ENCODE measurements at regions of chr12 and their contacts with region 1.

Region 1: DNA sequence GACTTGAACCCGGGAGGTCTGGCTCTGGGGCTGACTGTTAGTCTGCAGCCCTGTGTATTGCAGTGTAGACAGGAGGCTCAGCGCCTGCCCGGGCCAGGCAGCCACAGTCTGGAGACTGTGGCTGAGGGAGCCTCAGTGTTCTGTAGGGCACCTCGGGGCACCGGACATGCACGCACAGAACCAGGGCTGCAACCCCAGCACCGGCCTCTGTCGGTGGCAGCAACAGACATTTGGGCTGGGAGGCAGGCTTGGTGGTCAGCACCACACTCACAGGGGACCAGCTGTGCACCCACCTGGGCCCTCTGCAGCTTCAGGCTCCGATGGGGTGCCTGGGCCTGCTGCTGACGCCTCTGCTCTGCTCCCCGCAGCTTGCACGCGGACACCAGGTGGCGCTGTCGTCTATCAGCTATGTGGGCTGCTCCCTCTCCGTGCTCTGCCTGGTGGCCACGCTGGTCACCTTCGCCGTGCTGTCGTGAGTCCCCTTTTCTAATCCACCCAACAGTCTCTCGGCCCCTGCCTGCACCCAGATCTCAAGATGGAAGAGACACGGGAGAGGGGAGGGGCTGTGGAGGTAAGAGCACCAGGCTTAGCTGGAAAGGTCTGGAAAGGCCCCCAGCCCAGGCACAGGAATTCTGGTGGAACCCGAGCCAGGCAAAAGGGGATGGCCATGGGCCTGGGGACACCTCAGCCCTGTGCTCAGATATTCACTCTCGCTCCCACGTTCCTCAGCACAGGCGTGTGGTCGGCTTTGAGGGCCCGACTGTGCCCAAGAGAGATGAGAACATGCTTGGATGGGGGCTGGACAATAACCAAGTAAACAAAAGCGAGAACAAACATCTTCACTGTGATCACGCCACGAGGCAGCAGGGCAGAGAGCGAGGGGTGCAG is 151.0 kb downstream of the ADGRD1 start:
- DNase-seq: peak; percentile 75

Region 2: GRCh38 chr12:130916251-130916911 is 188.3 kb before region 1 on chr12:
- in situ Hi-C with region 1: loop called (anchors 25 kb)
- DNase-seq: peak; percentile 83